ENCODE measurements at regions of chr5 and their contacts with region 1.

Region 1: DNA sequence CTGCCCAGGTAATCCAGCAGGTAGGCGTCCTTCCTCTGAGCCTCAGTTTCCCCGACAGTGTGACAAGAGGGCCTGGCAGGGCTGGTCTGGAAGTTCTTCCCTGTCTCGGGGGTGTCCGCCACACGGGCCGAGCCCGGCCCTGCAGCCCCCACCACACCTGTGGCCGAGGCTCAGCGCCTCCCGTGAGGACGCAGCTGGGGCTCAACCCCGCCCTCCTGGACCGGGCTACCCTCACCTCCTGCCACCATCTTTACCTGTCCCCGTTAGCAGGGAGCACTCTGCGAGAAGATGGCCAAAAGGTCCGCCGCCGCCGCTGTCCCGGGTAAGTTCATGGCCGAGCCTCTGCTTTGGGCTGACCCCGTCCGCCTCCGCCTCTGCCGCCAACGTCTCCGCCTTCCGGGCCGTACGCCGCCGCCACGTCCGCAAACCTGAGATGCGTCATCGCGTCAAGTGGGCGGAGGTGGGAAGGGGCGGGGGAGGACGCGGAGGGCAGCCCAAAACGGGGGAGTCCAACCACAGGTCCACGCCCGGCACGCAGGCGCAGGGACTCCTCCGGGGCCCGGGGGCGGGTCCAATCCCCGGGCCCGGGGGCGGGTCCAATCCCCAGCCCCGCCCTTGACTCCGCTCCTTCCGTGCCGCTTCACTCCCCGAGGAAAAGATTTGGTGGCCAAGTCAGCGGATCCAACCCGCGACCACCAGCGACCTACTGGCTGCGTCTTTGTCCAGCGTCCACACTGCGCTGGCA is at the start of gene LYSMD3:
- DNase-seq: peak; percentile 98
- ATAC-seq: peak; percentile 95
- H3K4me3 Mint-ChIP-seq: peak within 1 kb of the TSS; percentile 89
- H3K27ac Mint-ChIP-seq: peak within 1 kb of the TSS; percentile 97
- H3K4me1 Mint-ChIP-seq: peaks cover 24% of the 10 kb centered on the region
- H3K27me3 Mint-ChIP-seq: peaks cover 23% of the 10 kb centered on the region
- total RNA-seq, gene LYSMD3: 15.5 to 16.8 TPM

Region 2: GRCh38 chr5:90409318-90410177 is 119.8 kb before region 1 on chr5 and contains the start of gene CETN3:
- CTCF ChIA-PET with region 1: interaction called, 12 read pairs
- DNase-seq: peak; percentile 95
- ATAC-seq: peak; percentile 95
- H3K4me3 Mint-ChIP-seq: no peak within 1 kb of the TSS
- H3K27ac Mint-ChIP-seq: no peak within 1 kb of the TSS
- H3K4me1 Mint-ChIP-seq: peaks cover 20% of the 10 kb centered on the region
- H3K27me3 Mint-ChIP-seq: no peaks in the 10 kb centered on the region
- total RNA-seq, gene CETN3: 28.0 TPM

Region 3: GRCh38 chr5:90438100-90438499 is 91.3 kb before region 1 on chr5:
- CTCF ChIA-PET with region 1: interaction called, 56 read pairs
- DNase-seq: no peak
- ATAC-seq: no peak
- H3K4me3 Mint-ChIP-seq: no peak overlapping the region
- H3K27ac Mint-ChIP-seq: no peak overlapping the region
- H3K4me1 Mint-ChIP-seq: peaks cover 8% of the 10 kb centered on the region
- H3K27me3 Mint-ChIP-seq: peaks cover 18% of the 10 kb centered on the region

Measured in activated CD8-positive, alpha-beta memory T cell treated with anti-CD3 and anti-CD28 coated beads, Interleukin-2, amount 10 ng/mL, durations not matched to agents 7 days and 5 days (primary cell).